GM18951 (cell line): ENCODE measurements at regions of chr13 and their contacts with region 1.

Region 1: DNA sequence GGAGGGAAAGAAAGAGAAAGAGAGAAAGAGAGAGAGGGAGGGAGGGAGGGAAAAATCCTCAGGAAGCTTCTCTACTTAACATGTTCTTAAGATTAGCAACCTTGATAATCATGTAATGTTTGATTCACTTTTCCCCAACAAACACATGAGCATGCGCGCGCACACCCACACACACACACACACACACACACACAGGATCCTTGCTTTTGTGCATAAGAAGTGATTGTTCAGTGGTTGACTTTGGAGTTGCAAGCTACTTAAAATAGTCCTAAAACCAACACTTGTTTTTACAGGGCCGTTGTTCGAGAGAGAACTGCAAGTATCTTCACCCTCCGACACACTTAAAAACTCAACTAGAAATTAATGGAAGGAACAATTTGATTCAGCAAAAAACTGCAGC is 100.0 kb upstream of the RAP2A start:
- POLR2A ChIP-seq: no peak

Region 2: DNA sequence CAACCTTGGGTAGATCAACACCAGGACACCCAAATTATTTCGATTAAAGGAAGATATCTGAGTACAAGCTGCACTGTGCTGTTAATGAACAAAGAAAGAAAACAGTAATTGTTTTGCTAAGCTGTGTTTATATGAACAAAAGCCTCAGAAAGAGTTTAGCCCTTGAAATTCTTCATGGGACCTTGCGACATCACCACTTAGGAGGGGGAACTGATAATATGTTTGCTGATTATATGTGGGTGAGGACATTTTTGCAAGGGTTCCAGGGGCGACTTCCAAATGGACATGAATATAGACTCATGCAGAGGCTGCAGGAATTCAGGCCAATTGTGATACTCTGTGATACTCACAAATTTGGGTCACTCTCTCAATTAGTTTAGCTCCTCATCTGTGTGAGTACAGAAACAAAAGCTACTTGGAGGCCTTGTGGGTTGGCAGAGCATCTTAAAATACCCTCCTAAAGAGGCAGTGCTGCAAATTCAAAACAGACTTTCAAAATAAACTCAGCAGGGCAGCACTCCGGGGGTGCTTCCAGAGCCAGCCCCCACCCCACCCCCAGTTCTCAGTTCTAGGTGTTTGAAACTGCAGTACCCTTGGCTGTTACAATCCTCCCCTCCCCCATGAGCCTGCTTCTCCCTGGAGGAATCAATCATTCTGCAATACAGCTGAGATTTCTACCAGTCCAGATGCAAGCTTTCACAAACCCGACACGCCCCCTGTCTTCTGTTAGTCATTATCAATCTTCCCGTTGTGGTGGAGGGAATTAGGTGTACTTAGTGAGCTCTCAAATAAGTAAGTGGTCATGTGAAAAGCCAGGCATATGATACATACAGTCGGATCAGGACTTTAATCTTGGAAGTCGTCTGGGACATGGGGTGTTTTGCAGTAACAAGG is 208.8 kb before region 1 on chr13:
- in situ Hi-C with region 1: loop called (anchors 5 kb)
- POLR2A ChIP-seq: no peak